Caco-2 (cell line): ENCODE measurements at regions of chr12 and their contacts with region 1.

Region 1: DNA sequence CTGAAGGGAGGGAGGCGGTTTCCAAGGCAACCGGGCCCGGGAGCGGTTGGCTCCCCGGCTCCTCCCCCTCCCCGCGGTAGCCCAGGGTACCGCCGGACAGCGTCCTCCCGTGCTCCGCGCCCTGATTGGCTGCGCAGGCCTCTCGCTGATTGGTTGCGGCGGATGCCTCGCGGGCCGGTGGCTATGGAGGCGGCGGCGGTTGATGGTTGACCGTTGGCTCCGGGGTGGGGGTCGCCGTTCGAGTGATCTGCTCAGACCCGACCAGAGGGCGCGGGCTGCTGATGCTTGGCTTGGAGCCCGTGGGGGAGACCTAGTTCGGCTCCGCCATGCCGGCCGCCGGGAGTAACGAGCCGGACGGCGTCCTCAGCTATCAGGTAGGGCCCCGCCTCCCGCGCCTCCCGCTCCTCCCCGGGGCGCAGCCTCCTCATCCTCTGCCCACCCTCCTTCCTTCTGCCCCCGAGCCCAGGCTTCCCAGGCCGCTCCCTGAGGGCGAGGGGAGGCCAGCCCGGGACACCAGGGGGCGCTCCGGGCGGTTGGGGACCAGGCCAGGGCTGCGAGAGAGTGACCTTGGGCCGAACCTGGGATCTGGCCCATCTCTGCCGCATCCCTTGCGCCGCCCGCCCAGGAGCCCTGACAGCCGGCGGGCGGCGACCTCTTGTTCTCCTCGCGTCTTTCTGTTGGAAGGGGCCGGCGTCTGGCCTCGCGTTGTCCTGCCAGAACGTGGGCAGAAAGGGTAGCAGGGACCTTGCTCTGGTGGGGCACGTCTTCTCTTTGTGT is at the start of gene SLC4A8:
- DNase-seq: peak; percentile 97 to 99
- H3K4me3 ChIP-seq: peak within 1 kb of the TSS; percentile 57
- H3K4me3 Mint-ChIP-seq: peak within 1 kb of the TSS; percentile 81
- H3K27ac Mint-ChIP-seq: peak within 1 kb of the TSS; percentile 69
- H3K4me1 ChIP-seq: peaks cover 26% of the 10 kb centered on the region
- H3K4me1 Mint-ChIP-seq: peaks cover 48% of the 10 kb centered on the region
- H3K27me3 ChIP-seq: no peaks in the 10 kb centered on the region
- H3K27me3 Mint-ChIP-seq: no peaks in the 10 kb centered on the region
- CTCF ChIP-seq: peak; percentile 93 to 98
- total RNA-seq, gene SLC4A8: 62.7 and 67.0 TPM in 2 replicates

Region 2: GRCh38 chr12:51028126-51028810 is 396.6 kb before region 1 on chr12:
- CTCF ChIA-PET with region 1: no interaction called
- POLR2A ChIA-PET with region 1: no interaction called
- intact Hi-C with region 1: no loop called
- DNase-seq: peak; percentile 83 to 84
- H3K4me3 ChIP-seq: peak overlapping the region; percentile 86
- H3K4me3 Mint-ChIP-seq: peak overlapping the region; percentile 82
- H3K27ac Mint-ChIP-seq: peak overlapping the region; percentile 46
- H3K4me1 ChIP-seq: peaks cover 32% of the 10 kb centered on the region
- H3K4me1 Mint-ChIP-seq: peaks cover 30% of the 10 kb centered on the region
- H3K27me3 ChIP-seq: no peaks in the 10 kb centered on the region
- H3K27me3 Mint-ChIP-seq: no peaks in the 10 kb centered on the region
- CTCF ChIP-seq: peak; percentile 53 to 72

Region 3: DNA sequence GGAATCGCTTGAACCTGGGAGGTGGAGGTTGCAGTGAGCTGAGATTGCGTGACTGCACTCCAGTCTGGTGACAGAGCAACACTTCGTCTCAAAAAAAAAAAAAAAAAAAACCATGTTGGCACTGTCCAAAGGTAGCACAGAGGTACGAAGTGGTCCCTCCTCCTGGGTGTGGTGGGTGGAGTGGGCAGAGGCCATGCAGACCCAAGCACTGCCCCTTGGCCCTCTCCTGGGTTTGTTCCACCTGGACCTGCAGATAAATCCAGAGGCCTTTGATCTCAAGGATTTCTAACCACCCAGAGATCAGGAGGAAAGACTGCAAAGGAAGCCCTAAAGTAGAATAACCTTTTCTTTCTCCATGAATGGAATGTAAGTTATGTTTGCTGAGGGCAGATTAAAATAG is 25.0 kb before region 1 on chr12:
- CTCF ChIA-PET with region 1: interaction called, 15 read pairs
- POLR2A ChIA-PET with region 1: no interaction called
- intact Hi-C with region 1: loop called (anchors 2 kb)
- DNase-seq: peak; percentile 97 to 99
- H3K4me3 ChIP-seq: no peak overlapping the region
- H3K4me3 Mint-ChIP-seq: peak overlapping the region; percentile 59
- H3K27ac Mint-ChIP-seq: peak overlapping the region; percentile 90
- H3K4me1 ChIP-seq: peaks cover 82% of the 10 kb centered on the region
- H3K4me1 Mint-ChIP-seq: peaks cover 78% of the 10 kb centered on the region
- H3K27me3 ChIP-seq: no peaks in the 10 kb centered on the region
- H3K27me3 Mint-ChIP-seq: no peaks in the 10 kb centered on the region
- CTCF ChIP-seq: no peak

Region 4: DNA sequence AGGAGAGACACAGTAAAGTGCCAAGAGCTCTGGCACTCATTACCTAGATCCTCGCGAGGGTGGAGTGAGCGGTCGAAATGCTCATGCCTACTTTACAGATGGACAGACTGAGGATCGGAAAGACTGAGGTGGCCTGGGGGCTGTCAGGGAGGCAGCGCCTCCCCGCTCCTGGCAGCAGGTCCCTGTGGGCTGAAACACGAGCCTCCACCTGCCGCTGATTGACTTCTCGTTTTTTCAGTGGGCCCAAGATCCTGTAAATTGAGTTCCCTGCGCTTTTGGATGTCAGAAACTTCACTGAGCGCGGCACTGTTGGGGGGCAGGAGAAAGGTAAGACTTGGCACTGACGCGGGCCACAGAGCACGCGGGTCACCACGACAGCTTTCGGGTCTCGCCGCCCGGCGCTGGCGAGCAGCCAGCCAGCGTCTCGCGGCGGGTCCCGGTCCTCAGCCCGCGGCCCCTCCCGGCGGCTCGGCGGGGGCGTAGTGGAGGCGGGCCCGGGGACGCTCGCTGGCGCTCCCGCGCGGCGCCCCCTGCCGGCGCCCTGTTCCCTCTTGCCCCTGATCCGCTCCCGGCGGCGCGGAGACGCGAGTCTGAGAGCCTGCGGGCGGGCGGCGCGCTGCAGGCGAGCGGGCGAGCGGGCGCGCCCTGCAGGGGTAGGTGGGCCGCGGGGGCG is 165.6 kb after region 1 on chr12:
- CTCF ChIA-PET with region 1: interaction called, 6 read pairs
- POLR2A ChIA-PET with region 1: no interaction called
- intact Hi-C with region 1: loop called (anchors 5 kb)
- DNase-seq: peak; percentile 87 to 97
- H3K4me3 ChIP-seq: peak overlapping the region; percentile 92
- H3K4me3 Mint-ChIP-seq: peak overlapping the region; percentile 90
- H3K27ac Mint-ChIP-seq: peak overlapping the region; percentile 60
- H3K4me1 ChIP-seq: 0 out of 2 replicates have a peak, but pooled peaks cover 7% of the 10 kb centered on the region
- H3K4me1 Mint-ChIP-seq: peaks cover 10% of the 10 kb centered on the region
- H3K27me3 ChIP-seq: no peaks in the 10 kb centered on the region
- H3K27me3 Mint-ChIP-seq: no peaks in the 10 kb centered on the region
- CTCF ChIP-seq: peak; percentile 61 to 63

Region 5: GRCh38 chr12:51788876-51789275 is 364.0 kb after region 1 on chr12:
- CTCF ChIA-PET with region 1: no interaction called
- POLR2A ChIA-PET with region 1: no interaction called
- intact Hi-C with region 1: no loop called
- DNase-seq: no peak
- H3K4me3 ChIP-seq: no peak overlapping the region
- H3K4me3 Mint-ChIP-seq: no peak overlapping the region
- H3K27ac Mint-ChIP-seq: no peak overlapping the region
- H3K4me1 ChIP-seq: no peaks in the 10 kb centered on the region
- H3K4me1 Mint-ChIP-seq: peaks cover 9% of the 10 kb centered on the region
- H3K27me3 ChIP-seq: no peaks in the 10 kb centered on the region
- H3K27me3 Mint-ChIP-seq: no peaks in the 10 kb centered on the region
- CTCF ChIP-seq: no peak

Region 6: GRCh38 chr12:51814311-51815088 is 389.6 kb after region 1 on chr12:
- CTCF ChIA-PET with region 1: interaction called, 9 read pairs
- POLR2A ChIA-PET with region 1: no interaction called
- intact Hi-C with region 1: loop called (anchors 1 kb)
- DNase-seq: peak; percentile 83 to 93
- H3K4me3 ChIP-seq: peak overlapping the region; percentile 66
- H3K4me3 Mint-ChIP-seq: peak overlapping the region; percentile 67
- H3K27ac Mint-ChIP-seq: peak overlapping the region; percentile 9
- H3K4me1 ChIP-seq: peaks cover 11% of the 10 kb centered on the region
- H3K4me1 Mint-ChIP-seq: peaks cover 18% of the 10 kb centered on the region
- H3K27me3 ChIP-seq: no peaks in the 10 kb centered on the region
- H3K27me3 Mint-ChIP-seq: no peaks in the 10 kb centered on the region
- CTCF ChIP-seq: peak; percentile 62 to 85

Region 7: DNA sequence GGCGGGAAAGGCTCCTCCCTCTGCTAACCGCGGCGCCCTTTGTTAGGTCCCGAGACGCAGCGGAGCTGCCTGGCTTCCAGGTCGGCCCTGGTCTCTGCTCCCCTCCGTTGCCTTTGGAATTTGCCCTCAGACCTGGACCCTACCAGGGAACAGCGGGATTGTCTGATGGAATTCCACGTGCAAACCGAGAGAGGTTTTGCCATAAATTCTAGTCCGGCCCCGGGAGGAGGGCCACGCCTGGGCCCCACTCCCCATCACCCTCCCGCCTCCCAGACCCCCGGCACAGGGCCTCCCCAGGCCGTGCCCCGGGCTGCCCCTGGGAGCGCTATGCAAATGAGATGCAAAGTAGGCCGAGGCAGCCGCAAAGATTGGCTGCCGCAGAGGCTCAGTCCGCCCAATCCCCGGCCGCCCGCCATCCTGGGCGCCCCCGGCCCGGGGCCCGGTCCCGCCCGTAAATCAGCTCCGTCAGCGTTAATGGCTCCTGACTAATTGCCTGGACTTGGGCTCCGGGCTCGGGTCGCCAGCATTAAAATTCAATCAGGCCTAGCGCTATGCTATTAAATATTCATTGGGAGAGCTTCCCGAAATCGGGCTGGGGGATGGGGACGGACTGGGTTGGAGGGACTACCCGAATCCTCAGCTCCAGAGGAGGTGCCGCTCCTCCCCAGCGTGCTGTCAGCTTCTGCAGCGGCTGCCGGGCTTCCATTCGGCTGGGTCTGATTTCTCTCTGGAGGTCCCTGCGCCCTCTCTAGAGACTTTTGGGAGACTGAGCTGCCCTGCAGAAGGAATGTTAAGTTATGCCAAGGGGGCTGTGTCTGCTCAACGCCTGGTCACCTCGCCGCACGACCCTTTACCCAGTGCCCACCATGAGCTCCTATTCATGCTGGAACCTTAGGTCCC is 439.3 kb after region 1 on chr12:
- CTCF ChIA-PET with region 1: no interaction called
- POLR2A ChIA-PET with region 1: no interaction called
- intact Hi-C with region 1: loop called (anchors 5 kb)
- DNase-seq: peak; percentile 88 to 91
- H3K4me3 ChIP-seq: peak overlapping the region; percentile 50
- H3K4me3 Mint-ChIP-seq: peak overlapping the region; percentile 68
- H3K27ac Mint-ChIP-seq: peak overlapping the region; percentile 75
- H3K4me1 ChIP-seq: peaks cover 36% of the 10 kb centered on the region
- H3K4me1 Mint-ChIP-seq: peaks cover 22% of the 10 kb centered on the region
- H3K27me3 ChIP-seq: no peaks in the 10 kb centered on the region
- H3K27me3 Mint-ChIP-seq: no peaks in the 10 kb centered on the region
- CTCF ChIP-seq: no peak

Region 8: GRCh38 chr12:52598966-52599365 is 1174.1 kb after region 1 on chr12:
- CTCF ChIA-PET with region 1: no interaction called
- POLR2A ChIA-PET with region 1: no interaction called
- intact Hi-C with region 1: no loop called
- DNase-seq: no peak
- H3K4me3 ChIP-seq: no peak overlapping the region
- H3K4me3 Mint-ChIP-seq: no peak overlapping the region
- H3K27ac Mint-ChIP-seq: no peak overlapping the region
- H3K4me1 ChIP-seq: no peaks in the 10 kb centered on the region
- H3K4me1 Mint-ChIP-seq: no peaks in the 10 kb centered on the region
- H3K27me3 ChIP-seq: no peaks in the 10 kb centered on the region
- H3K27me3 Mint-ChIP-seq: peaks cover 6% of the 10 kb centered on the region
- CTCF ChIP-seq: no peak